ENCODE measurements at regions of chr7 and their contacts with region 1.

Region 1: GRCh38 chr7:92178927-92179924 is at the start of gene LRRD1:
- DNase-seq: peak; percentile 5
- H3K4me3 ChIP-seq: peak within 1 kb of the TSS; percentile 55
- CTCF ChIP-seq: peak; percentile 98

Region 2: DNA sequence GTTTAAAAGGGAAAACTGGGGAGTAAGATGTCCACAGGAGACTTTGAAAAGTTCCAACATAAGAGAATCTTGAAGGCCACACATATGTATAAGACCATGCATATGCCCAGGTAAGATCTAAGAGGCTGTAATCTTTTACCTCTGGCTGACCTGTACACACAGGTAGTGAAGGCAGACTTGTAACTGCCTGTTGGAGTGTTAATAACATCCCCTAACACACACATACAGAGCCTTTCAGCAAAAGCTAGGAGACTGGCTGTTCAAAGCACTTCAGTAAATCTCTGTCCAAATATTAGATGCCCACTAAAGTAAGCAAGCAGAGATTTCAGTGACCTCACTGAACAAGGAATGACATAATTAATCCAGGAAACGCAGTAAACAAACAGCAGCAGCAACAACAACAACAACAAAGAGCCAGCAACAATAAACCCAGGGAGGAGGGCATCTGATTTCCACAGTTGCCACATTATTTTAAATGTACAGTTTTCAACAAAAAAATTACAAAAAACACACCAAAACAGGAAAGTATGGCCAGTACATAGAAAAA is 59.9 kb before region 1 on chr7:
- CTCF ChIA-PET with region 1: no interaction called
- POLR2A ChIA-PET with region 1: no interaction called
- DNase-seq: no peak
- H3K4me3 ChIP-seq: no peak overlapping the region
- CTCF ChIP-seq: no peak

Region 3: GRCh38 chr7:92158660-92159575 is 20.3 kb before region 1 on chr7:
- CTCF ChIA-PET with region 1: interaction called, 30 read pairs
- POLR2A ChIA-PET with region 1: no interaction called
- DNase-seq: peak; percentile 73
- H3K4me3 ChIP-seq: no peak overlapping the region
- CTCF ChIP-seq: no peak

Region 4: DNA sequence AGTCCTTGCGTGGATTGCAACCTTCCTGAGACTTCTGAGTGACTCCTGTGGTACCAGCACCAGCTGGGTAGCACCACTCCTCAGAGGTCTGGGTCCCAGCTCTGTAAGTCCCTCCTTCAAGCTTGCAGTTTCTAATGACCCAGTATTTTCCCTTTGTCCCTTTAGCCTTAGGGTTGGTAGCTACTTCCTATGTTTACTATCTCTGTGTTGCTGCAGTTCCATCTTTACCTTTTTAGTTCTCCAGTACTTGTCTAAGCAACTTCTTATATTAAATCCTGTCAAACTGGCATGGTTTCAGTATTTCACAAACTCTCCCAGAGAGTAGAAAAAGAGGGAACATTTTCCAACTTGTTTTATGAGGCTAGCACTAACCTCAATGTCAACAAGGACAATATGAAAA is 13.1 kb before region 1 on chr7:
- CTCF ChIA-PET with region 1: interaction called, 30 read pairs
- POLR2A ChIA-PET with region 1: no interaction called
- DNase-seq: no peak
- H3K4me3 ChIP-seq: no peak overlapping the region
- CTCF ChIP-seq: no peak

Region 5: GRCh38 chr7:92192326-92192725 is 13.1 kb after region 1 on chr7:
- CTCF ChIA-PET with region 1: interaction called, 28 read pairs
- POLR2A ChIA-PET with region 1: no interaction called
- DNase-seq: no peak
- H3K4me3 ChIP-seq: no peak overlapping the region
- CTCF ChIP-seq: no peak

Region 6: GRCh38 chr7:92198743-92199142 is 19.5 kb after region 1 on chr7:
- CTCF ChIA-PET with region 1: interaction called, 28 read pairs
- POLR2A ChIA-PET with region 1: no interaction called
- DNase-seq: no peak
- H3K4me3 ChIP-seq: no peak overlapping the region
- CTCF ChIP-seq: no peak

Region 7: GRCh38 chr7:92245487-92246362 is 66.5 kb after region 1 on chr7 and contains the starts of genes ANKIB1 and KRIT1:
- CTCF ChIA-PET with region 1: interaction called, 11 read pairs
- POLR2A ChIA-PET with region 1: no interaction called
- DNase-seq: no peak
- H3K4me3 ChIP-seq: peak within 1 kb of the TSS; percentile 82
- CTCF ChIP-seq: no peak

Region 8: GRCh38 chr7:92461027-92462003 is 282.1 kb after region 1 on chr7:
- CTCF ChIA-PET with region 1: interaction called, 14 read pairs
- POLR2A ChIA-PET with region 1: no interaction called
- DNase-seq: no peak
- H3K4me3 ChIP-seq: no peak overlapping the region
- CTCF ChIP-seq: peak; percentile 65